ENCODE measurements at regions of chr16 and their contacts with region 1.

Region 1: DNA sequence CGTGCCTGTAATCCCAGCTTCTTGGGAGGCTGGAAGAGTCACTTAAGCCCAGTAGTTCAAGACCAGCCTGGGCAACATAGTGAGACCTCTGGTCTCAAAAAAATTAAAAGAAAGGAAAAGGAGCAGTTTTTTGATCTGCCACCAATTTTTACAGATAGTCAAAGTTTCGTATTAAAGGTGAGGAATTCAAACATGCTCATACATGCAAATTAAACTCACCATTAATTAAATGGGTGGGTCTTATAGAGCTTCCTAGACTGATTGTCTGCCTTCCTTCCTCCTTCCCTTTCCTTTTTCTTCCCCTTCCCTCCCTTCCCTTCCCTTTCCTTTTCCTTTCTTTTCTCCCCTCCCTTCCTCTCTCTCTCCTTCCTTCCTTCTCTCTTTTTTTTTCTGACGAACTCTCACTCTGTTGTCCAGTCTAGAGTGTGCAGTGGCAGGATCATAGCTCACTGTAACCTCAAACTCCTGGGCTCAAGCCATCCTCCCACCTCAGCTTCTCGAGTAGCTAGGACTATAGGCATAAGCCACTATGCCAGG is 36.4 kb upstream of the VPS4A start:
- DNase-seq: no peak
- H3K4me3 ChIP-seq: no peak overlapping the region
- H3K27ac ChIP-seq: no peak overlapping the region
- H3K4me1 ChIP-seq: no peaks in the 10 kb centered on the region
- H3K27me3 ChIP-seq: no peaks in the 10 kb centered on the region
- CTCF ChIP-seq: no peak
- EP300 ChIP-seq: no peak
- POLR2A ChIP-seq: no peak
- RAD21 ChIP-seq: no peak

Region 2: GRCh38 chr16:69286941-69287713 is 12.4 kb after region 1 on chr16:
- CTCF ChIA-PET with region 1: interaction called, 16 read pairs
- POLR2A ChIA-PET with region 1: interaction called, 3 read pairs
- DNase-seq: no peak
- H3K4me3 ChIP-seq: no peak overlapping the region
- H3K27ac ChIP-seq: no peak overlapping the region
- H3K4me1 ChIP-seq: no peaks in the 10 kb centered on the region
- H3K27me3 ChIP-seq: no peaks in the 10 kb centered on the region
- CTCF ChIP-seq: peak in 2 of 3 experiments; percentile 10 to 25; a peak in 2 of 4 replicates
- EP300 ChIP-seq: no peak
- POLR2A ChIP-seq: no peak
- RAD21 ChIP-seq: no peak; a peak in 2 of 4 replicates

Region 3: GRCh38 chr16:69386596-69386995 is 111.8 kb after region 1 on chr16:
- CTCF ChIA-PET with region 1: no interaction called
- POLR2A ChIA-PET with region 1: no interaction called
- DNase-seq: no peak
- H3K4me3 ChIP-seq: peak overlapping the region in 1 of 4 experiments; percentile 85; a peak in 1 of 8 replicates
- H3K27ac ChIP-seq: no peak overlapping the region
- H3K4me1 ChIP-seq: no peaks in the 10 kb centered on the region; a peak in 1 of 7 replicates
- H3K27me3 ChIP-seq: no peaks in the 10 kb centered on the region
- CTCF ChIP-seq: no peak
- EP300 ChIP-seq: no peak
- POLR2A ChIP-seq: no peak
- RAD21 ChIP-seq: no peak

Measured in H1 (cell line).